ENCODE measurements at regions of chr9 and their contacts with region 1.

Region 1: DNA sequence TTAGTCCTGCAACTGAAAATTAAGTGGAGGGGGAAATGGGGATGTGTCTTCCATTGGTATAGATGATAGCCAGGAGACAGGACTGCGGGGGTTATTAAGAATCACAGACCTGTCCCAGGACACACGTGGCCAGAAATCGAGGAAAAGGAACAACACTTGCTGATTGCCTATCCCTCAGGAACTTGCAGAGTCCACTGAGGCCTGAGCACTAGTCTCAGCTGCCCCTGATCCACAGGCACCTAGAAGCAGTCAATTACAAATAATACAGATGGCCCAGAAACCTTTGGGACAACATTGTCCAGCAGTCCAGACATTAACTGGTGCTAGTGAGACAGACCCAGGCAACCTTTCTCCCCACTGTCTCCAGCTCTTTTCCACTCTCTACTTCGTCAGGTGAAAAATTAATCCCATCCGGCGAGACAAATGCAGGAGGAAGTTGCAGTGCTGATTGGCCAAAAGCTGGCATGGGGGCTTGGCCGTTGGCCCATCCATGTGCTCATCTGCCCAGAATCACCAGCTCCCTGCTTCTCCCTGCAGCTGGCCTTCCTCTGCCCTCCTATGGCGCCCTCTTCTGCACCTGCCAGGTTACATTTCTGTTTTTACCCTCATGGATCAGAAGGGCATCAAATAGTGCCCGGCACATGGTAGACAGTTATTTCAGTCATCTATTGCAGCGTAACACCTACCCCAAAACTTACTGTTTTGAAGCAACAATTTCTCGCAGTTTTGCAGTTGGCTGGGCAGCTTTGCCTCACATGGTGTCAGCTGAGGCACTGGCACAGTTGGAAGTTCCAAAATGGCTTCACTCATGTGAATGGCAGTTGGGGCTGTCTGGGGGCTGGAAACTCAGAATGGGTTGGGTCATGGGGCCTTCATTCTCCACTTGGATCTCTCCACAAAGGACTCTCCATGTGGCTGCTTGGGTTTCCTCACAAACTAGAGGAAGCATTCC is 3.6 kb upstream of the B4GALT1 start:
- DNase-seq: peak; percentile 64
- H3K4me3 ChIP-seq: no peak overlapping the region
- H3K27ac ChIP-seq: no peak overlapping the region
- H3K4me1 ChIP-seq: peaks cover 8 to 19% of the 10 kb centered on the region in 2 experiments; a peak in 2 of 4 replicates
- H3K27me3 ChIP-seq: no peaks in the 10 kb centered on the region
- CTCF ChIP-seq: peak; percentile 47
- EP300 ChIP-seq: no peak
- RAD21 ChIP-seq: peak; percentile 80

Region 2: DNA sequence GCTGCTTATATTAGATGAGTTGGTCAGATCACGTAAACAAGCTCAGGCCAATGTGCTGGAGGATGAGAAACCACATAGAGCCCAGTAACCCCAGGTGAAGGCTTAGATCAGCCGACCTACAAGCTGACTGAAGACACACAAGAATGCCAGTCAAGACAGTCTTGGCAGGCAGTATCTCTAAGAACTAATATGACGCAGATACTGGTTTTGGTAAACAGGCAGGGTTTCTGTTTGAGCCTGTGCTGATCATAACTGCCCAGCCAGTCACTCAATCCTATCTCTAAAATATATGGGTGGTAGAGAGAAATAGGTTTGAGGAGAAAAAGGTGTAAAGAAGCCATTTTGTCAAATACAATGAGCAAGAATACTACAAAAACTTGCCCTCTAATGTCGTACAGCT is 636.9 kb before region 1 on chr9:
- CTCF ChIA-PET with region 1: no interaction called
- POLR2A ChIA-PET with region 1: no interaction called
- DNase-seq: no peak
- H3K4me3 ChIP-seq: no peak overlapping the region
- H3K27ac ChIP-seq: no peak overlapping the region
- H3K4me1 ChIP-seq: no peaks in the 10 kb centered on the region
- H3K27me3 ChIP-seq: no peaks in the 10 kb centered on the region
- CTCF ChIP-seq: no peak
- EP300 ChIP-seq: no peak
- RAD21 ChIP-seq: no peak

Region 3: GRCh38 chr9:33159760-33160127 is 11.0 kb before region 1 on chr9:
- CTCF ChIA-PET with region 1: interaction called, 18 read pairs
- POLR2A ChIA-PET with region 1: no interaction called
- DNase-seq: peak; percentile 43
- H3K4me3 ChIP-seq: peak overlapping the region; percentile 3 to 30; a peak in 2 of 4 replicates
- H3K27ac ChIP-seq: peak overlapping the region; percentile 94 to 96
- H3K4me1 ChIP-seq: peaks cover 66 to 67% of the 10 kb centered on the region in 2 experiments
- H3K27me3 ChIP-seq: no peaks in the 10 kb centered on the region
- CTCF ChIP-seq: no peak
- EP300 ChIP-seq: no peak
- RAD21 ChIP-seq: no peak

Region 4: GRCh38 chr9:33393581-33393980 is 222.8 kb after region 1 on chr9:
- CTCF ChIA-PET with region 1: no interaction called
- POLR2A ChIA-PET with region 1: no interaction called
- DNase-seq: no peak
- H3K4me3 ChIP-seq: no peak overlapping the region
- H3K27ac ChIP-seq: no peak overlapping the region
- H3K4me1 ChIP-seq: peaks cover 2 to 6% of the 10 kb centered on the region in 2 experiments; a peak in 2 of 4 replicates
- H3K27me3 ChIP-seq: no peaks in the 10 kb centered on the region
- CTCF ChIP-seq: no peak
- EP300 ChIP-seq: no peak
- RAD21 ChIP-seq: no peak

Measured in SK-N-SH (cell line).